Mammary epithelial cell (primary cell): ENCODE measurements at regions of chr1 and their contacts with region 1.

Region 1: GRCh38 chr1:113072757-113073478 is at the start of gene LRIG2:
- DNase-seq: peak; percentile 99
- H3K4me3 ChIP-seq: peak within 1 kb of the TSS; percentile 65 to 92 (median 86)
- H3K27ac ChIP-seq: peak within 1 kb of the TSS; percentile 75
- H3K4me1 ChIP-seq: peaks cover 11% of the 10 kb centered on the region
- H3K27me3 ChIP-seq: no peaks in the 10 kb centered on the region
- CTCF ChIP-seq: peak; percentile 57 to 66
- total RNA-seq, gene LRIG2: 11.6 to 17.3 TPM

Region 2: GRCh38 chr1:112722601-112723510 is 350.1 kb before region 1 on chr1:
- CTCF ChIA-PET with region 1: no interaction called
- dilution Hi-C with region 1: no loop called
- in situ Hi-C with region 1: loop called in 1 of 2 experiments (anchors 10 kb)
- intact Hi-C with region 1: no loop called
- DNase-seq: no peak
- H3K4me3 ChIP-seq: no peak overlapping the region
- H3K27ac ChIP-seq: no peak overlapping the region
- H3K4me1 ChIP-seq: peaks cover 24% of the 10 kb centered on the region
- H3K27me3 ChIP-seq: no peaks in the 10 kb centered on the region
- CTCF ChIP-seq: no peak

Region 3: GRCh38 chr1:112809253-112809684 is 263.6 kb before region 1 on chr1:
- CTCF ChIA-PET with region 1: no interaction called
- dilution Hi-C with region 1: no loop called
- in situ Hi-C with region 1: no loop called
- intact Hi-C with region 1: loop called (anchors 2 kb)
- DNase-seq: peak; percentile 62
- H3K4me3 ChIP-seq: no peak overlapping the region
- H3K27ac ChIP-seq: no peak overlapping the region
- H3K4me1 ChIP-seq: peaks cover 9% of the 10 kb centered on the region
- H3K27me3 ChIP-seq: no peaks in the 10 kb centered on the region
- CTCF ChIP-seq: peak; percentile 95 to 96

Region 4: GRCh38 chr1:113118266-113118665 is 45.3 kb after region 1 on chr1:
- CTCF ChIA-PET with region 1: no interaction called
- dilution Hi-C with region 1: no loop called
- in situ Hi-C with region 1: no loop called
- intact Hi-C with region 1: no loop called
- DNase-seq: peak; percentile 8
- H3K4me3 ChIP-seq: no peak overlapping the region
- H3K27ac ChIP-seq: no peak overlapping the region
- H3K4me1 ChIP-seq: no peaks in the 10 kb centered on the region
- H3K27me3 ChIP-seq: no peaks in the 10 kb centered on the region
- CTCF ChIP-seq: no peak

Region 5: GRCh38 chr1:113201570-113201969 is 128.7 kb after region 1 on chr1:
- CTCF ChIA-PET with region 1: no interaction called
- dilution Hi-C with region 1: no loop called
- in situ Hi-C with region 1: no loop called
- intact Hi-C with region 1: no loop called
- DNase-seq: no peak
- H3K4me3 ChIP-seq: no peak overlapping the region
- H3K27ac ChIP-seq: no peak overlapping the region
- H3K4me1 ChIP-seq: no peaks in the 10 kb centered on the region
- H3K27me3 ChIP-seq: no peaks in the 10 kb centered on the region
- CTCF ChIP-seq: no peak